MCF 10A (cell line): ENCODE measurements at regions of chr3 and their contacts with region 1.

Region 1: DNA sequence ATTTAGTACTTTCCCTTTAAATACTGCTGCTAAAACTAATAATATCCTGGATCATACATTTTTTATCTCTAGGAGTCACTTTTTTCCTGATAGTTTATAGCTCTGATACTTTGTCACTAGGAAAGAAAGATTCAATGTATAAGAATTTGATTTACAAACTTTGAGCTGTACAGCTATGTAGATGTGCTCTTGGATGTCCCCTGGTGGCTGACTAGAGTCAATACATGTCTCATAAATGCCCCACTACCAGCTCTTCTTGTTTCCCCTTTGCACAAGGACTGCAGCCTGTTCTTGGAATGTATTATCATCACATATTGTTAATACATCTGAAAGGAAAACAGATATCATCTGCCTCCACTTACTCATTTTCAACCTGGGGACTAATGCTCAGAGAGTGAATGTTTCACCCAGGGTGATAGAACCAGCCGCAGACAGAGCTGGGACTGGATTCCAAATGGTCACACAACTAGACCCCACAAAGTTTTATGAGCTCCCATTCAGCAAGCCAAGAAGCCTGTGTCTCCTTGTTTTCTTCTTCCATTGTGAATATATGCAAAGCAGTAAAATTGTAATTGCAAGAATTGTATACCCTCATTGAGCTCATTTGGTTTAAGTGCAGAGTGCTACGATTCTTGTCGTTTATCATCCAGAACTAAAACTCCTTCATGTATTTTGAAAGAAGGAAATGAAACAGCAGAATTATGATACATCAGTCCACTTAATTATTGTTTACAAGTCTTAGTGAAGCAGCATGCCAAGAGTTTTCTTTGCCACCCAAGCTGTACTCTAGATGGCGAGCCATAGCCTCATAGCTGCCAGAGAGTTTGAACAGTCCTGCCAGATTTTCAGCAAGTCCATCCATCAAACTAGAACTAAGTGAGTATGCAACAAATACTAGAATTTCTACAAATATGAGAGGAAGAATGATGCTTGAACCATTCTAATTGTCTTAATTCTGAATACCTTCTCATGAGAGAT is 261.6 kb upstream of the LMCD1 start:
- DNase-seq: peak; percentile 68
- H3K4me3 Mint-ChIP-seq: no peak overlapping the region
- H3K27ac Mint-ChIP-seq: no peak overlapping the region
- H3K4me1 Mint-ChIP-seq: peaks cover 10% of the 10 kb centered on the region
- H3K27me3 Mint-ChIP-seq: no peaks in the 10 kb centered on the region
- CTCF ChIP-seq: peak; percentile 90

Region 2: DNA sequence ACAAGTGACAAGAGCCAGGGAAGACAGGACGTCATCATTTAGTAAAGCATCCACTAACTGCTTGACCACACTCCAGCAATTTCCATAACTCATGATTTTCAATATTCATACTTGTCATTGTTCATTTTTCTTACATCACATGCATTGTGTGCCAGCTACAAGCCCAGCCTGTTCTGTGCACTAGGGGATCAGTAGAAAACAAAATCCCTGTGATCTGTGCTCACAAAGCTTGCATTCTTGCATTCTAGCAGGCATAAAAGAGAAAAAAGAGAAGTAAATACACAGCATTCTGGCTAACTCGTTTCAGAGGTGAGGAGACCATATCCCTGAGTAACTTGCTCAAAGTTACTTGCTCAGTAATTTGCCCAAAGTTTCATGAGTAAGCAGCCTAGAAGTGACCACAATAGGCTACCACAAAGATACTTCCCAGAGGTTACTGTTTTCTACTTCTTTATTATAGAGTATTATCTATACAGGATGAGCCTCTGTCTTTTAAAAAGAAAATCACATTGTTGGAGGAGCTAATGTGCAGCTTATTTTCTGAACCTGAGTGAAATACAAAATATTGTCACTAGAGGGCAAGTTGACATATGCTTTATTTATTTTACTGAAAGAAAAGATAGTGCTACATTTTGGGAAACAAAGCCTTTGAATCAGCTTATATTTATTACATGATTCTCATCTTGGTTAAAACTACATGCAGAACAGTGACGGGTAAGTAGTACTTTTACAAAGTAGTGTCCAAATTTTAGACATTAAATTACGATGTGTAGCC is 439.8 kb before region 1 on chr3:
- CTCF ChIA-PET with region 1: interaction called, 9 read pairs
- POLR2A ChIA-PET with region 1: interaction called, 3 read pairs
- intact Hi-C with region 1: loop called (anchors 1 kb)
- DNase-seq: peak; percentile 4
- H3K4me3 Mint-ChIP-seq: no peak overlapping the region
- H3K27ac Mint-ChIP-seq: peak overlapping the region; percentile 35
- H3K4me1 Mint-ChIP-seq: peaks cover 7% of the 10 kb centered on the region
- H3K27me3 Mint-ChIP-seq: no peaks in the 10 kb centered on the region
- CTCF ChIP-seq: peak; percentile 37

Region 3: DNA sequence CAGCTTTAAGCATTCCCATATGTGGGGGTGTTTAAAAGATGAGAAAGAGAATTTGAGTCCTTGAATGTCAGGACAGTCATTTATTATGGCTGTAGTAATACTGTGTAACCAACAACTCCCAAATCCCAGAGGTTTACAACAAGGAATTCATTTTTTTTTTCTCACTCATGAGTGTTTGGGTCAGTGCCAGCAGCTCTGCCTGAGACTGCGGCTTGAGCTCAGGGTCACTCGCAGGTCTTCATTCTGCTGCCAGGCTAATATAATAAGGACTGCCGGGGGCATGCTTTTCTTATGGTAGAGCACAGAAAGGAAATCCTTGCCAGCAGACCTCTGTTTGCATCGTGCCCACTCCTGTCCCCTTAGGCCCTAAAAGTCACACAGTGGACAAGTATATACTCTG is 16.2 kb before region 1 on chr3:
- CTCF ChIA-PET with region 1: interaction called, 20 read pairs
- POLR2A ChIA-PET with region 1: no interaction called
- intact Hi-C with region 1: no loop called
- DNase-seq: no peak
- H3K4me3 Mint-ChIP-seq: no peak overlapping the region
- H3K27ac Mint-ChIP-seq: no peak overlapping the region
- H3K4me1 Mint-ChIP-seq: no peaks in the 10 kb centered on the region
- H3K27me3 Mint-ChIP-seq: no peaks in the 10 kb centered on the region
- CTCF ChIP-seq: no peak

Region 4: GRCh38 chr3:8254489-8254888 is 14.5 kb after region 1 on chr3:
- CTCF ChIA-PET with region 1: interaction called, 55 read pairs
- POLR2A ChIA-PET with region 1: no interaction called
- intact Hi-C with region 1: no loop called
- DNase-seq: peak; percentile 51
- H3K4me3 Mint-ChIP-seq: no peak overlapping the region
- H3K27ac Mint-ChIP-seq: no peak overlapping the region
- H3K4me1 Mint-ChIP-seq: no peaks in the 10 kb centered on the region
- H3K27me3 Mint-ChIP-seq: no peaks in the 10 kb centered on the region
- CTCF ChIP-seq: no peak

Region 5: GRCh38 chr3:8416965-8417364 is 177.0 kb after region 1 on chr3:
- CTCF ChIA-PET with region 1: interaction called, 17 read pairs
- POLR2A ChIA-PET with region 1: no interaction called
- intact Hi-C with region 1: loop called (anchors 2 kb)
- DNase-seq: peak; percentile 62
- H3K4me3 Mint-ChIP-seq: peak overlapping the region; percentile 47
- H3K27ac Mint-ChIP-seq: no peak overlapping the region
- H3K4me1 Mint-ChIP-seq: peaks cover 9% of the 10 kb centered on the region
- H3K27me3 Mint-ChIP-seq: peaks cover 6% of the 10 kb centered on the region
- CTCF ChIP-seq: no peak

Region 6: DNA sequence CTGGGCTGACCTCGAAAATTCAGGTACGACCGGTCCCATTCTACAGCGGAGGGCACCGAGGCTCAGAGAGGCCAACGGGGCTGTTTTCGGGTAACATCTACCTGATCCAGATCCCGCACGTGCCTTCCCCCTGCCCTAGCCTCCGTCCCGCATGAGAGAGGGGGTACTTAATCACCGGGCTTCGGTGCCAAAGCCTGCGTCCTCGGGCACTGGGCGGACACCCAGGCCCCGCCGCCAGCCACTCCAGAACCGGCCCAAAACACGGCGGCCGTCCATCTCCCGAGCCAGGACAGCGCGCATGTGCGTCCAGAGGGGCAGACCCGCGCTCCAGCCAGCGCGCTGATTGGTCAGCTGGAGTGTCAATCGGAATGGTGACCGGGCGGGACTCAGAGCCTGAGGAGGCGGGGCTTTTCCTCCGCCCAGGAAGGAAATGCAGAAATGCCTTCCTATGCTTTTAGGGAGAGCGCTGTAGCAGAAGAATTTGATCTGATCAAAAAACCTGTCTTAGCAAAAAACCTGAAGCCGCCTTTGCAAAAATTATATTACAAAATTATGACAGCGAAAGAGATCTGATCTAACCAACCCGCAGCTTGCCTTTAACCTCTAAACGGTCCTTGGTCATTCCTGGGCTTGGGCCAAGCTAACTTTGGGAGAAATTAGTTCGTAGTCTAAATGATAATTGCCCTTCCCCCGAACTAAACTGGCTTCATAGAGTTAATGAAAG is 1603.9 kb after region 1 on chr3 and contains the start of gene RPUSD3:
- CTCF ChIA-PET with region 1: no interaction called
- POLR2A ChIA-PET with region 1: no interaction called
- intact Hi-C with region 1: no loop called
- DNase-seq: peak; percentile 95
- H3K4me3 Mint-ChIP-seq: peak within 1 kb of the TSS; percentile 100
- H3K27ac Mint-ChIP-seq: peak within 1 kb of the TSS; percentile 92
- H3K4me1 Mint-ChIP-seq: peaks cover 14% of the 10 kb centered on the region
- H3K27me3 Mint-ChIP-seq: no peaks in the 10 kb centered on the region
- CTCF ChIP-seq: no peak
- total RNA-seq, gene RPUSD3: 40.3 and 40.7 TPM in 2 replicates